Endothelial cell of umbilical vein (primary cell): ENCODE measurements at regions of chr6 and their contacts with region 1.

Region 1: DNA sequence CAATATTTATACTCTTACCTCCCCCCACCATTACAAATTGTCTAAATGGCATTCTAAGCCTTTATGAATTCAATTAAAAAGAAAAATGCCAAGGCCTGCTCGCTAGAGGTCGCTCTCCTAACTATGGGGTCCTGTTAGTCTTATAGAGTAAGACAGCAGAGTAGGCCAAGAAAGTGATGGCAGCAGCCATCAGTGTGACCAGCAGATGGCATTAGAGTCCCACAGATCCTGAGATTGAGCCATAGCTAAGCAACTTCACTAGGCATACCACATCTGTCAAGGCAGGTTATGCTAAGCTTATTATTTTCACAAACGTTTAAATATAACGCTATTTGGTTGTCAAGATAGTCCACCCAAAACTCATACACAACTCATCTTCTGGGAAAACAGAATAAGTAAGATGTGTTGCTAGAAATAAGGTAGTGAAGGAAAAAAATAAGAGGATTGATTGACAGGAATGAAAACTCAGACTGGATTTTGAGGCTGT is 57.6 kb upstream of the SCAF8 start:
- DNase-seq: peak; percentile 99
- H3K4me3 ChIP-seq: no peak overlapping the region
- H3K27ac ChIP-seq: no peak overlapping the region
- H3K4me1 ChIP-seq: no peaks in the 10 kb centered on the region
- H3K27me3 ChIP-seq: no peaks in the 10 kb centered on the region
- CTCF ChIP-seq: peak; percentile 94 to 99
- POLR2A ChIP-seq: peak; percentile 21

Region 2: DNA sequence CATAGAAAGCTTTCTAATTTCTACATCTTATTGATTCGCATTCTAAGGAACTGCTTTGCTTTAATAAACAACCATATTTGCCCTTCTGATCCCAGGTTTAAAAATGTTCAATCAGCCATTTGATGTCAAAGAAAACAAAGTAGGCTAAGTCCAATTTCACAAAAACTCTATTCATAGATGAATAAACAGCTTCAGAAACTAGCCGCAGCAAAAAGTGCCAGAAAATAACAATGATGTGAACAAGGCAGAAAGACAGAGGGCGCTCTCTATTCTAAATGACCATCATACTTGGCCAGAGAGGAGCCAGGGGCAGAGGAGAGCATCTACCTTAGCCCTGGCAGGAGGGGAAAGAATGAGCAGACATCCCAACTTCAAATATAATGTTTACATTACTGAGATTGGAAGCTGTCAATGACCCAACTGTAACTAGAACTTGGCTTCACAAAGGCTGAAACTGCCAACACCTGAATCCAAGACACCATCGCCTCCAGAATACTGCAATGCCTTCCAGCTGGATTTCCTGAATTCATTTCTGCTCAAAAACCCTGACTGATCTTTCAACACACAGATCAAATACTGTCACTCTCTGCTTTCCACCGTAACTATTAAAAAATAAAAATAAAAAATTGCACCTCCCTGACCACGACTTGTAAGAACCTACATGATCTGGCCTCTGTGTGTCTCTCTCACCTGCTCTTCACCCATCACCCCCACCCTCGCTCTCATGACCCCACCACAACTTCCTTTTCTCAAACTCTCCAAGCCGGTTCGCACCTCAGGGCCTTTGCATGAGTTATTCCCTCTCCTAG is 174.7 kb before region 1 on chr6:
- CTCF ChIA-PET with region 1: interaction called, 24 read pairs
- POLR2A ChIA-PET with region 1: no interaction called
- dilution Hi-C with region 1: no loop called
- intact Hi-C with region 1: no loop called
- DNase-seq: peak; percentile 67
- H3K4me3 ChIP-seq: no peak overlapping the region
- H3K27ac ChIP-seq: no peak overlapping the region
- H3K4me1 ChIP-seq: peaks cover 19% of the 10 kb centered on the region
- H3K27me3 ChIP-seq: no peaks in the 10 kb centered on the region
- CTCF ChIP-seq: peak; percentile 44 to 47
- POLR2A ChIP-seq: no peak

Region 3: GRCh38 chr6:154661768-154662167 is 13.9 kb before region 1 on chr6:
- CTCF ChIA-PET with region 1: interaction called, 11 read pairs
- POLR2A ChIA-PET with region 1: no interaction called
- dilution Hi-C with region 1: no loop called
- intact Hi-C with region 1: no loop called
- DNase-seq: peak; percentile 92
- H3K4me3 ChIP-seq: no peak overlapping the region
- H3K27ac ChIP-seq: peak overlapping the region; percentile 61
- H3K4me1 ChIP-seq: peaks cover 17% of the 10 kb centered on the region
- H3K27me3 ChIP-seq: no peaks in the 10 kb centered on the region
- CTCF ChIP-seq: peak; percentile 31 to 42
- POLR2A ChIP-seq: peak; percentile 29

Region 4: DNA sequence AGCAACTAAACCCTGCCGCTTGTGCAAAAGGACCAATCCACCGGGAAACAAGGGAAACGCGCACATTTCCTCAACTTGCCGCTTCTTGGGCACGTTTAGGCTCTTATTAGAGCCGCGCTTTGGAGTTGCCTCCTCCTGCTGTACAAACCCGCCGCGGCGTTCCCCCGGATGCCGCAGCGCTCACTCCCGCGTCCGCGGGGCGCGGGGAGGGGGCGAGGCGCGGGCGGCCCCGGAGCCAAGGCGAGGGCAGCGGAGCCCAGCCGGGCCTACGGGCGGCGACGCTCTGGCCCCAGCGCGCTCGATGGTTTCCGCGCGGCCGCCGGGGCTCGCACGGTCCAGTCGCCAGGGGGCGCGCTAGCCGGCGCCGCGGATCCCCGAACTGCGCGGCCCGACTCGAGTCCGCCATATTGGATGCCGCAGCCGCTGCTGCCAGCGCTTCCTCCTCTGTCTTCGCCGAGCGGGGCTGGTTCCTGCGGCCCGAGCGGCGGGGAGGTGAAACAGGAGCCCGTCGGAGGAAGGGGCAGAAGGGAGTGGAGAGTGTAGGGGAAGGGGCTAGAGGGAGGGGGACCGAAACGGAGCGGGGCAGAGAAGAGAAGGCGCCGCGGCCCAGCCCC is 57.5 kb after region 1 on chr6 and contains the start of gene SCAF8:
- CTCF ChIA-PET with region 1: interaction called, 19 read pairs
- POLR2A ChIA-PET with region 1: no interaction called
- dilution Hi-C with region 1: no loop called
- intact Hi-C with region 1: loop called (anchors 1 kb)
- DNase-seq: peak; percentile 81
- H3K4me3 ChIP-seq: peak within 1 kb of the TSS; percentile 74 to 96 (median 89)
- H3K27ac ChIP-seq: peak within 1 kb of the TSS; percentile 90
- H3K4me1 ChIP-seq: peaks cover 20% of the 10 kb centered on the region
- H3K27me3 ChIP-seq: no peaks in the 10 kb centered on the region
- CTCF ChIP-seq: peak; percentile 83 to 85
- POLR2A ChIP-seq: peak; percentile 84
- total RNA-seq, gene SCAF8: 37.4 and 37.8 TPM in 2 replicates

Region 5: GRCh38 chr6:154868143-154868594 is 192.5 kb after region 1 on chr6:
- CTCF ChIA-PET with region 1: interaction called, 29 read pairs
- POLR2A ChIA-PET with region 1: no interaction called
- dilution Hi-C with region 1: no loop called
- intact Hi-C with region 1: loop called (anchors 1 kb)
- DNase-seq: peak; percentile 57
- H3K4me3 ChIP-seq: no peak overlapping the region
- H3K27ac ChIP-seq: no peak overlapping the region
- H3K4me1 ChIP-seq: no peaks in the 10 kb centered on the region
- H3K27me3 ChIP-seq: no peaks in the 10 kb centered on the region
- CTCF ChIP-seq: peak; percentile 53 to 54
- POLR2A ChIP-seq: no peak

Region 6: DNA sequence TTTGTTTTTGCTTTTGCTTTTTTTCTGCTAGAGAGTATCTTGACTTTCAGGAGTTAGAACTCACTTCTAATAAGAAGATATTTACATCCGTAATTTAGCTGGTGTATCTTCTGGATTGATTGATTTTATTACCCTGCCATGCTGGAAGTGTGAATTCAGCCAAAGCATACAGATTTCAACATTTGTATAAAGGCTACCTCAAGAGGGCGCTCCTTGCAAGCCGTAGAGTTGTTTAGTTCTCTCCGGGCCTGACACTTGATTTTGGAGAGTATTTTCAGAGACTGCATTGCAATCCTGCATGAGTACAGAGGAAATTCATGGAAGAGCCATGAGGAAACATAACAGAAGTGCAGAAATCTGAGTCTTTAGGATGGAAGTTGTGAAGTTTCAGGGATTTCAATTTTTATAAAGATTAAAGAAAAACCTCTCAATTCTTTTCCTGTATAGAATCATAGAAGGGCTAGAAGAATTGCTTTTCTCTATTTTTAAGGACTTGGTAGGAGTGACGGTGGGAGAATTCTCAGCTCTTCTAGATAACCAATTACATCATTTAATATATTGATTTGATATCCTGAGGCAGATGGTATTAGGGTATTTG is 252.8 kb after region 1 on chr6:
- CTCF ChIA-PET with region 1: interaction called, 16 read pairs
- POLR2A ChIA-PET with region 1: no interaction called
- dilution Hi-C with region 1: no loop called
- intact Hi-C with region 1: loop called (anchors 1 kb)
- DNase-seq: peak; percentile 76
- H3K4me3 ChIP-seq: no peak overlapping the region
- H3K27ac ChIP-seq: no peak overlapping the region
- H3K4me1 ChIP-seq: peaks cover 13% of the 10 kb centered on the region
- H3K27me3 ChIP-seq: no peaks in the 10 kb centered on the region
- CTCF ChIP-seq: peak; percentile 65 to 73
- POLR2A ChIP-seq: no peak